HEK293 (cell line): ENCODE measurements at regions of chr6 and their contacts with region 1.

Region 1: GRCh38 chr6:3209114-3210023 is 18.1 kb downstream of the TUBB2B start:
- H3K4me3 ChIP-seq: no peak overlapping the region
- H3K27ac ChIP-seq: no peak overlapping the region; the same call in 1 of the 2 replicates
- H3K4me1 ChIP-seq: 0 out of 2 replicates have a peak, but pooled peaks cover 3% of the 10 kb centered on the region
- CTCF ChIP-seq: peak; percentile 16; the same call in 1 of the 2 replicates

Region 2: GRCh38 chr6:3119040-3119723 is 90.2 kb before region 1 on chr6:
- CTCF ChIA-PET with region 1: interaction called, 15 read pairs
- POLR2A ChIA-PET with region 1: no interaction called
- H3K4me3 ChIP-seq: peak overlapping the region; percentile 94
- H3K27ac ChIP-seq: peak overlapping the region; percentile 87; the same call in 1 of the 2 replicates
- H3K4me1 ChIP-seq: 0 out of 2 replicates have a peak, but pooled peaks cover 3% of the 10 kb centered on the region
- CTCF ChIP-seq: no peak

Region 3: DNA sequence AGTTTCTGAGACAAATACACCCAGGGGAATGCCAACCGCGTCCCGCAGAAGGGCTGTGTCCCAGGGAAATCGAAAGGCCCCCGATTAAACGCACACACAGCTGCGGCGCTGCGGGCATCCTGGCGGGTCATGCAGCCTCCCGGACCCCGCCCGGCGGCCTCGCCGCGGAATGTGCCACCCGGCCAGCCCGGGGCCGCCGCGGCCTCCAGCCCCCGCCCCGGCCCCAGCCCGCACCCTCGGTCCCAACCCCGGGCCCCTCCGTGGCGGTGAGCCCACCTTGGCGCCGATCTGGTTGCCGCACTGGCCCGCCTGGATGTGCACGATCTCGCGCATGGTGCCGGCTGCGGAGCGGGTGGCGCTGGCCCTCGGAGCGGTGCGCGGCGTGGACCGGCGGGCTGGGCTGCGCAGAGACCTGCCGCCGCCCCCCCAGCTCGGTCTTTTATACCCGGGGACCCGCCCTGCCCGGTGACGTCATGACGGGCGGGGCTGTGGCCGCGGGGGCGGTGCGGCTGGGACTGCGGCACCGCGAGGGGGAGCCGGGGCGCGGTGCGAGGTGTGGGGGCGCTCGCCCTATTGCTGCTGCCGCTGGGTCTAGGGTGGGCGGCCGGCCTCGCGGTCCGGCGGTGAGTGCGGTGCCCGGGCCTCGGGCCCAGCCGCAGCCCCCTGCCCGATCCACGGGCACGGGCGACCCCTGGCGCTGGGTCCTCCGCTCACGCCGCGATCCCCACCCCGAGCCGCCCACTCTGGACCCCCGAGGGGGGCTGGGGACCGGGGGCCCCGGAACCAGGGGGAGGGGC is 52.0 kb before region 1 on chr6 and contains the start of gene TUBB2A:
- CTCF ChIA-PET with region 1: interaction called, 17 read pairs
- POLR2A ChIA-PET with region 1: interaction called, 23 read pairs
- H3K4me3 ChIP-seq: peak within 1 kb of the TSS; percentile 71
- H3K27ac ChIP-seq: peak within 1 kb of the TSS; percentile 71; the same call in 1 of the 2 replicates
- H3K4me1 ChIP-seq: peaks cover 9% of the 10 kb centered on the region
- CTCF ChIP-seq: no peak; the same call in 1 of the 2 replicates

Region 4: DNA sequence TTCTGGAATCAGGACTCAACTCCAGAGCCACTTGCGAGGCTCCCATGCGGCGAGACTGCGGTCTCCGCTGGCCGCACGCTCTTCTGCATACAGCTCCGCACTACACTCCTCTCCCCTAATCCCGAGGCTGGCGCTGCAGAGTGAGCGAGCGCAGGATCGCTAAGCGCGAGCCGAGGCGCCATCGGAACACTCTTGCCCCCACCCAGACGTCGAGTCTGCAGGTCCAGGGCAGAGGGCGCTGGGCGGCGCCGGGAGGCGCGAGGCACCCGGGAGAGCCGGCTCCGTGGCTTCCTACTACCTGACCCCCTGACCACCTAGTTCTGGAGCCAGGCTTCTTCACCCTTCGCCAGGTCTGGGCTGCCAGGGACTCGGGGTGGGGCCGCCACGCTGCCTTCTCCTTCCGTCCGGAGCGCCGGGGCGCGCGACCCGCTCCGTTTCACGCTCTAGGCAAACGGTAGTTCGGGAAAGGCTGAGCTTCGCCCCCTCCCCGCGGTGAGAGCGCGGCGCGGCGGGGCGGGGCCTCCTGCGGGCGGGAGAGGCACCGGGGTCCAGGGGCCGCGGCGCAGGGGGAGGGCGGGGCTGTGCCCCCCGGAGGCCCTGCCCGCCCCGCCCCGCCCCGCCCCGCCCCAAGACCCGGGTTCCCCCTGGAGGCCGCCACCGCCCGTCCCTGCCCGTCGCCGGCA is 46.7 kb before region 1 on chr6:
- CTCF ChIA-PET with region 1: interaction called, 17 read pairs
- POLR2A ChIA-PET with region 1: interaction called, 23 read pairs
- H3K4me3 ChIP-seq: peak overlapping the region; percentile 63
- H3K27ac ChIP-seq: peak overlapping the region; percentile 90
- H3K4me1 ChIP-seq: peaks cover 24% of the 10 kb centered on the region
- CTCF ChIP-seq: peak; percentile 90

Region 5: GRCh38 chr6:3176562-3177355 is 32.6 kb before region 1 on chr6:
- CTCF ChIA-PET with region 1: no interaction called
- POLR2A ChIA-PET with region 1: interaction called, 10 read pairs
- H3K4me3 ChIP-seq: no peak overlapping the region
- H3K27ac ChIP-seq: no peak overlapping the region
- H3K4me1 ChIP-seq: peaks cover 4% of the 10 kb centered on the region; the same call in 1 of the 2 replicates
- CTCF ChIP-seq: no peak

Region 6: DNA sequence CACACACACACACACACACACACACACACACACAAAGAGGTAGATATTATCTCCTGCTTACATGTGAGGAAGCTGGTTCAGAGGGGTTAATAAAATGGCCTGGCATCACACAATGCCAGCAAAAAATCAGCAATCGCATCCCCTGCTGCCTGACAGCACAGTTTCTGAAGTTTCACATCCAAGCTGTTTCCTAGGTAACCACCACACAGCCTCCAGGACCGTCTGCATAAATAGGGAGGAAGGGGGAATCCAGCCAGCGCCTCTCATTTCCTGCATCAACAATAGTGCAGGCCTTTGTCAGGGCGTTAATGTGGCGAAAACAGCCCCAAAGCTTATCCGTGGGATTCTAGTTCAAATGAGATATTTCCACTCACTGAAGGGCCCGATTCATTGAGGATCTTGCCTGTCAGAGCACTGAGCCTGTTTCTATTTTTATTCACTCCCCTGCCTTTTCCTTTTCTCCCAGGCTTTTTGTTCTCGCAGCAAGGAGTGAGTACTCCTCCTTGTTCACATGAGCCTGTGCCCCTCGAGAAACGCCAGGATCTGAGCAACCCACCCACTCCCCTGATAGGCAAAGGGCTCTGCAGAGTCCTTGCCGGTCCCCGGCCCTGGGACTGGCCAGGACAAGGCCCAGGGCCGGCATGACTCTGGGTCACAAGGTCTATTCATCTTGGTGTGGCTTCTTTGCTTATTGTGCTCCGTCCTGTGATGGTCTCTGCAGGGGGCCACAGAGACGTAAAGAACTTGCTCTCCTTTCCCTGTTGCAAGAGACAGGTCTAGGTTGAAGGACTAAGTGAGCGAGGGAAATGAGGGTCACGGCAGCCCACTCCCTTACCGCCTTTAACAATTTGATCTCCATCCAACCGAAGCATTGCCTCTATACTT is 14.6 kb before region 1 on chr6:
- CTCF ChIA-PET with region 1: interaction called, 12 read pairs
- POLR2A ChIA-PET with region 1: interaction called, 4 read pairs
- H3K4me3 ChIP-seq: no peak overlapping the region
- H3K27ac ChIP-seq: no peak overlapping the region
- H3K4me1 ChIP-seq: no peaks in the 10 kb centered on the region
- CTCF ChIP-seq: no peak

Region 7: DNA sequence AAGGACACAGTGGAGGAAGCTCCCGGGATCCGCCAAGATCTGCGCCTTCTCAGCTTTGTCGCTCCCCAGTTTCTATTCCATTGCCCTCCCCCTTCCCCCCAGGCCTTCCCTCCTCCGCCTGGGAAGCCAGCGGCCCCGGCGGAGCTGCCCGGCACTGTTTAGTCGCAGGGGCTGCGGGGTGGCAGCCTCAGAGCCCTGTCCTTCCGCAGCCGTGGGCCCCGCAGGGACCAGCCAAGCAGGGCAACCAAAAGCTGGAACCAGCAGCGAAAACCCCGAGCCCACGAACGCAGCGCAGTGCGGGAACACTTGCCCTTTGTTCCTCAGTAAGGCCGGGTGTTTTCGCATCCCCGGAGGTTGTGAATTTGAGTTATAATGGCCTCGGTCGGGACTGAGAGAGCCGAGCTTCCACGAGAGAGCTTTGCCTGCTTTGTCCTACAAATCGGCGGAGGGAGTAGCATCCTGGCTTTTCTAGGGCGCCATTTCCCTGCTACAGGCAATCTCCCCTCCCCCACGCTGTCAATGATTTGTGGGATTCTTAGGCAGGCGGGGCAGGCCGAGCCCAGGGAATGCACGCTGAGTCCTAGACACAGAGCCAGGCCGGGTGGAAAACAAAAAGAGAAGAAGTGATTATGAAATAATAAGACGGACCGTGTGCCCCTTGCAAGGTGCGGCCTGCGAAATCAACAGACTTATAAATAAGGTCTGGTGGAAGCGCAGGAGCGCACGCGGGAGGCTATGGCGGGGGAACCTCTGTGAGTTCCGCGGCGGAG is 22.1 kb after region 1 on chr6:
- CTCF ChIA-PET with region 1: interaction called, 6 read pairs
- POLR2A ChIA-PET with region 1: interaction called, 25 read pairs
- H3K4me3 ChIP-seq: peak overlapping the region; percentile 71
- H3K27ac ChIP-seq: peak overlapping the region; percentile 94
- H3K4me1 ChIP-seq: peaks cover 7% of the 10 kb centered on the region; the same call in 1 of the 2 replicates
- CTCF ChIP-seq: no peak